ENCODE measurements at regions of chr2 and their contacts with region 1.

Region 1: GRCh38 chr2:118046634-118047210 is 32.9 kb upstream of the CCDC93 start:
- DNase-seq: peak; percentile 53
- ATAC-seq: peak; percentile 81
- H3K4me3 ChIP-seq: no peak overlapping the region
- H3K27ac ChIP-seq: no peak overlapping the region
- H3K4me1 ChIP-seq: no peaks in the 10 kb centered on the region
- H3K27me3 ChIP-seq: peaks cover 21% of the 10 kb centered on the region
- CTCF ChIP-seq: peak; percentile 69
- POLR2A ChIP-seq: no peak
- RAD21 ChIP-seq: peak; percentile 69

Region 2: DNA sequence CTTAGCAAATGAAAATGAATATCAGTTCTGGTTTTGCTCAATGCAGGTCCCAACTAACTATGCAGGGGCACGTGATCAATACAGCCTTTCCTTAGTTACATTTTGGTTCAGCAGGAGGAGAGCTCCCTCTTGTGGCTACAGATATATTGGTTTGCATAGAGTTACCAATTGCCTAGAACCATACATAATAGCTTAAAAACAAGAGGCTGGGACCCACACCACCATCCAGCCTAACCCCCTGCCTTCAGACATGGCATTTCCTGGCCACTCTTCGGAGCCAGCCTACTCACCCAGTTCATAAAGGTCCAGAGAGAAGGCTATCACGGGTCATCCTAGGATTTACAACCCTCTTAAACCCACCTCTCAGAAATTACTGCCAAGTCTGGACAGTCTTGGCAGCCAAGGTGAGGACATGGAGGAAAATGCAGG is 43.3 kb before region 1 on chr2:
- CTCF ChIA-PET with region 1: no interaction called
- POLR2A ChIA-PET with region 1: no interaction called
- dilution Hi-C with region 1: no loop called
- in situ Hi-C with region 1: no loop called
- intact Hi-C with region 1: no loop called
- DNase-seq: peak; percentile 85
- ATAC-seq: peak; percentile 96
- H3K4me3 ChIP-seq: no peak overlapping the region
- H3K27ac ChIP-seq: no peak overlapping the region
- H3K4me1 ChIP-seq: no peaks in the 10 kb centered on the region
- H3K27me3 ChIP-seq: no peaks in the 10 kb centered on the region
- CTCF ChIP-seq: peak; percentile 96
- POLR2A ChIP-seq: no peak
- RAD21 ChIP-seq: peak; percentile 96

Region 3: DNA sequence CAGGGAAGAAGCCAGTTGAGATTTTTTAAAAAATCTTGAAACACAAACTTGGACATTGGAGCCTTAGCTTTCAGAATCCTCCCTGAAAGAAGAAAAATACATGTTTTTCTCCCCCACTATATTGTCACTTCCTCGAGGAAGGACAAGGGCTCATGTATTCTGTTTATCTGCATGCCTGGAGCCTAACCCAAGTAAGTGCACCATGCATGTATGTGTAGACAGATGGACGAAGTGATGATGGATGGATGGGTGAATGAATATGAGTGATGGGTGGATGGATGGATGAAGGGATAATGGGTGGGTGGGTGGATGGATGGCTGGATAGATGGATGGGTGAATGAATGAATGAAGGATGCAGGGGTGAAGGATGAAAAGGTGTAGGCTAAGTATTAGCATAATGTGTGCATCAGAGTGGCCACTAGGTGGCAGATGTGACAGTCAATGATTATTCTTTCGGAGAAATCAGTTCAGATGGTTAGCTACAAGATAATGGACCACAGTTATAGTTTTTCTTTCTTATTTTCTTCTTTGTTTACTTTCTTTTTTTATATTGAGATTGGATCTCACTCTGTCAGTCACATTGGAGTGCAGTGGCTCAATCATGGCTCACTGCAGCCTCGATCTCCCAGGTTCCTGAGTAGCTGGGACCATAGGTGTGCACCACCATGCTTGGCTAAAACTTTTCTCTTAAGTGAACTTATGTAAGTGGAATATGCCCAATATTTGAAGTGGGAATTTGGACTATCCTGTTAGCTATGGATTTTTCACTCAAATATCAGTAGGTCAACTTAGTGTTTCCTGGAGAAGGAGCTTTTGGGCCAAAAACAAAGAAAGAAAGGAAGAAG is 14.3 kb before region 1 on chr2:
- CTCF ChIA-PET with region 1: interaction called, 11 read pairs
- POLR2A ChIA-PET with region 1: no interaction called
- dilution Hi-C with region 1: no loop called
- in situ Hi-C with region 1: no loop called
- intact Hi-C with region 1: no loop called
- DNase-seq: peak; percentile 34
- ATAC-seq: peak; percentile 90
- H3K4me3 ChIP-seq: no peak overlapping the region
- H3K27ac ChIP-seq: no peak overlapping the region
- H3K4me1 ChIP-seq: no peaks in the 10 kb centered on the region
- H3K27me3 ChIP-seq: peaks cover 5% of the 10 kb centered on the region
- CTCF ChIP-seq: peak; percentile 69
- POLR2A ChIP-seq: no peak
- RAD21 ChIP-seq: peak; percentile 41

Region 4: DNA sequence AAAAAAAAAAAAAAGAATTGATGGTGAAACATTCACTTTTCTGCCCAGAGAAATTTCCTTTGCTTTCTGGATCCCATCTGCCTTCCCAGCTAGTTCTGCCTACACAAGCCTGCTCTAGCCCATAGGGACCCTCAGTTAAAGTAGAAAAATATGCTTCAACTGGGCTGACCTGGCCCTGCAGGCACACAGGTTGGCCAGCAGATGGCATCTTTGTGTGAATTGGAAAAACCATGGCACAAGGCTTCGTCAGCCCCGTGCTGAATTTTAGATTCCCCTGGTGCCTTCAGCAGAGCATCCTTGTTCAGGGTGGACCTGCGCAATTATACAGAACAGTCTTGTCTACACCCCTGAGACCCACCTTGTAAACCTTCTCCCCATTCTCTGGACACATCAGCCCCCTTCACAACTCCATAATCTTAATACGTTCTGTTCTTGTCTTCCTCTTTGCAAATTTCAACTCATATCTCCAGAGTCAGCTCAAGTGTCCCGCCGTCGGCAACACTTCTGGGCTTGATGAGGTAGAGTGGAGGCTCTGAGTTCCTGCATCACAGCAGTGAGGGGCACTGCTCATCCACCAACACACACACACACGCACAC is 156.1 kb after region 1 on chr2:
- CTCF ChIA-PET with region 1: no interaction called
- POLR2A ChIA-PET with region 1: no interaction called
- dilution Hi-C with region 1: no loop called
- in situ Hi-C with region 1: no loop called
- intact Hi-C with region 1: loop called (anchors 5 kb)
- DNase-seq: peak; percentile 36
- ATAC-seq: peak; percentile 96
- H3K4me3 ChIP-seq: no peak overlapping the region
- H3K27ac ChIP-seq: no peak overlapping the region
- H3K4me1 ChIP-seq: no peaks in the 10 kb centered on the region
- H3K27me3 ChIP-seq: peaks cover 5% of the 10 kb centered on the region
- CTCF ChIP-seq: peak; percentile 72
- POLR2A ChIP-seq: no peak
- RAD21 ChIP-seq: peak; percentile 45

Region 5: GRCh38 chr2:118221666-118222594 is 175.2 kb after region 1 on chr2:
- CTCF ChIA-PET with region 1: interaction called, 4 read pairs
- POLR2A ChIA-PET with region 1: no interaction called
- dilution Hi-C with region 1: no loop called
- in situ Hi-C with region 1: no loop called
- intact Hi-C with region 1: loop called (anchors 1 kb)
- DNase-seq: peak; percentile 76
- ATAC-seq: peak; percentile 96
- H3K4me3 ChIP-seq: no peak overlapping the region
- H3K27ac ChIP-seq: no peak overlapping the region
- H3K4me1 ChIP-seq: no peaks in the 10 kb centered on the region
- H3K27me3 ChIP-seq: peaks cover 43% of the 10 kb centered on the region
- CTCF ChIP-seq: peak; percentile 82
- POLR2A ChIP-seq: no peak
- RAD21 ChIP-seq: peak; percentile 77

Region 6: GRCh38 chr2:118431165-118431517 is 384.4 kb after region 1 on chr2:
- CTCF ChIA-PET with region 1: no interaction called
- POLR2A ChIA-PET with region 1: no interaction called
- dilution Hi-C with region 1: no loop called
- in situ Hi-C with region 1: no loop called
- intact Hi-C with region 1: no loop called
- DNase-seq: no peak
- ATAC-seq: no peak
- H3K4me3 ChIP-seq: no peak overlapping the region
- H3K27ac ChIP-seq: no peak overlapping the region
- H3K4me1 ChIP-seq: no peaks in the 10 kb centered on the region
- H3K27me3 ChIP-seq: no peaks in the 10 kb centered on the region
- CTCF ChIP-seq: no peak
- POLR2A ChIP-seq: no peak
- RAD21 ChIP-seq: no peak